Head of caudate nucleus (tissue), 42 donors: ENCODE measurements at regions of chr7 and their contacts with region 1.

Region 1: DNA sequence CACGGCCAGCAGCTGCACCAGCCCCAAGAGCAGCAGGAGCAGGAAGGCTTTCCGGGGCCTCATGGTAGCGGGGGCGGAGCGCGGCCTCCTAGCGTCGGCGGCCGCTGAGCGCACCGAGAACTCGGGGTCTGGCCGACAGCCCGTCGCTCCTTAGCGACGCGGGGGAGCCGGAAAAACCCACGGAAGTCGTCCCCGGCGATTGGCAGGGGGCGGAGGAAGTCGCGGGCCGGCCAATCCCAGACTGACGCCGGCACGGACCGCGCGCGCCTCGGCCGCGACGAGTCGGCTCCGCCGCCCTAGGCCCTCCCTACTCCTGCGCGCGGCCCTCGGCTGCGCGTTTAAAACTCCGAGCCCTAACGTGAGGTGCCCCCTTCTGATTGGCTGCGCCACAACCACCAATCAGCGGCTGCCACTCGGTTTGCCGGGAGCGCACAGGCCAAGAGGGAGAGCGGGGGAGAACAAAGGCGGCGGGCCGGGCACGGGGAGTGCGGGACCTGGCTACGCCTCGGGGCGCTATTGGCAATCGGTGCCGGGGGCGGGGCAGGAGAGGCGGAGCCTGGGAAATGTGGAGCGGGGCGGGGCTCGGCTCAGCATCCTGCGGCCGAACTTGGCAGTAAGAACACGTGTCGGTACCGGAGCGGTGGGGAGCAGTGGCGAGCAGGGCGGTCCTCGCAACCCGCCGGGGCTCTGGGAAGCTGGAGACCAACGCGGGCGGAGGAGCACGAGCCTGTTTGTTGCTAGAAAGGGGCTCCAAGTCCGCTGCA is at the start of gene PDIA4:
- DNase-seq: peak; percentile 99 to 100 (median 100)

Region 2: DNA sequence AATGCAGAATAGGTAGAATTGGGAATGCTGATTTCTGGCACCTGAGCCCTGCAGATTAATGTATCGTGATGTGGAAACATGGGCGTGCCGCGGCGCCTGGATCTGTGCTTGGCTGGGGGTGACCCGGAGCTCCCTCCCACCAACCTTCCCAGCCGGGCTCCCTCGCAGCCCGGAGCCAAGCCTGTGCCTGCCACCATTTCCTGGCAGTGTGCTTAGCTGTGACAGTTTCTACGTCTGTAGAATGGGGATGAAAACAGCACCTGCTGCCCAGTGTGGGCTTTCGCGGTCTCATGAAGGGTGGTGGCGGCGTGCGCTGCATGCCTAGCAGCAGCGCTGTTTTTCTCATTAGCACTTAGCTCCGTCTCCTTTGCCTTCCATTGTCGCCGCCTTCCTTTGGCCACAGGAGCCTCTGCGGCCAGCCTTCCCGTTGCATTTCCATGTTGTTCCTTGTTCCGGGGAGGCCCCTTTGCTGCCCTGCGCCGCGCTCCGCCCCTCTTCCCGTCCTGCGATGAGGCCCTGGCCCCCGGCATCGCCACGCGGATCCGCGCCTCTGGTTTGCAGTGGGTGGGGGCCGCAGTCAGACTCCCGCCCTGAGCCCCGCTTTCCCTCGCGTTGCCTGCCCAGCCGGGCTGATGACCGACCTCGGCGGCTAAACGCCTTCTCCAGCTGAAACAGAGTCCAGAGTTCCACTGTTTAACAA is 245.6 kb before region 1 on chr7:
- intact Hi-C with region 1: no loop called
- DNase-seq: no peak

Region 3: GRCh38 chr7:148987010-148987750 is 41.3 kb before region 1 on chr7:
- intact Hi-C with region 1: loop called (anchors 1 kb)
- DNase-seq: peak; percentile 60 to 92 (median 80)

Region 4: GRCh38 chr7:149195180-149196150 is 166.9 kb after region 1 on chr7 and contains the start of gene ZNF282:
- intact Hi-C with region 1: no loop called
- DNase-seq: peak; percentile 79 to 96 (median 90)